Activated naive CD4-positive, alpha-beta T cell treated with anti-CD3 and anti-CD28 coated beads for 36 hours (primary cell): ENCODE measurements at regions of chr14 and their contacts with region 1.

Region 1: DNA sequence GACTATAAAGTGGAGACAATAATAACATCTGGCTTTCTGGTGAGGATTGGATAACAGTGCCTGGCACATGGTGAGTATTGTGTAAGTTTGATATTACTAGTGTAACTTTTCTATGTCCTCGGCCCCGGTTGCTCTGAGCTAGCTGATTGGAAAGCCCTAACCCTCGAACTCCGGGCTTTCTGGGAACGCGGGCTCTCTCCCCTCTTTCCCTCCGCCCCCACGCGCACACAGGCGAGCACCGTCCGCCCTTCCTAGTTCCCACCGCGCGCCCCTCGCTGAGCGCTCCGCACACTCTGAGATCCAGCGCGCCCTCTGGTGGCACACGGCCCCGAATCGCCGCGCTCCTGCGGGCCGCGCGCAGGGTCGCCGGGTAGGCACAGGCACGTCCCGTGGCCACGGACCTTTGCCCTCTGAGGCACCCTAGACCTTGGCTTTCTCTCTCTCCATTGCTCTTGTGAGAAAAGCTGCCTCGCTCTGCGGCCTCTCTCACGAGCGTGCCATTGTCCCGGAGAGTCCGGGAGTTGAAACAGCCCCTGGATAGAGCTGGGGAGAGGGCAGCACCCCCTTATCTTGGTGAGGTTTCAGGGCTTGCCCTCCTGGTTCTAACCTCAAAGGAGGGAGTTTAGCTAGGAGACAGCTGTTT is 23.2 kb upstream of the ESRRB start:
- DNase-seq: peak; percentile 53
- H3K4me3 Mint-ChIP-seq: no peak overlapping the region
- H3K27ac Mint-ChIP-seq: no peak overlapping the region
- H3K4me1 Mint-ChIP-seq: peaks cover 2% of the 10 kb centered on the region
- H3K27me3 Mint-ChIP-seq: peaks cover 8% of the 10 kb centered on the region

Region 2: GRCh38 chr14:75709207-75709812 is 643.5 kb before region 1 on chr14:
- CTCF ChIA-PET with region 1: interaction called, 7 read pairs
- intact Hi-C with region 1: loop called (anchors 10 kb)
- DNase-seq: peak; percentile 80
- H3K4me3 Mint-ChIP-seq: no peak overlapping the region
- H3K27ac Mint-ChIP-seq: no peak overlapping the region
- H3K4me1 Mint-ChIP-seq: no peaks in the 10 kb centered on the region
- H3K27me3 Mint-ChIP-seq: no peaks in the 10 kb centered on the region

Region 3: GRCh38 chr14:76045773-76046172 is 307.0 kb before region 1 on chr14:
- CTCF ChIA-PET with region 1: interaction called, 74 read pairs
- intact Hi-C with region 1: loop called (anchors 1 kb)
- DNase-seq: no peak
- H3K4me3 Mint-ChIP-seq: no peak overlapping the region
- H3K27ac Mint-ChIP-seq: no peak overlapping the region
- H3K4me1 Mint-ChIP-seq: no peaks in the 10 kb centered on the region
- H3K27me3 Mint-ChIP-seq: no peaks in the 10 kb centered on the region

Region 4: GRCh38 chr14:76050797-76051392 is 301.9 kb before region 1 on chr14:
- CTCF ChIA-PET with region 1: interaction called, 74 read pairs
- intact Hi-C with region 1: loop called (anchors 1 kb)
- DNase-seq: peak; percentile 76
- H3K4me3 Mint-ChIP-seq: no peak overlapping the region
- H3K27ac Mint-ChIP-seq: no peak overlapping the region
- H3K4me1 Mint-ChIP-seq: no peaks in the 10 kb centered on the region
- H3K27me3 Mint-ChIP-seq: no peaks in the 10 kb centered on the region

Region 5: DNA sequence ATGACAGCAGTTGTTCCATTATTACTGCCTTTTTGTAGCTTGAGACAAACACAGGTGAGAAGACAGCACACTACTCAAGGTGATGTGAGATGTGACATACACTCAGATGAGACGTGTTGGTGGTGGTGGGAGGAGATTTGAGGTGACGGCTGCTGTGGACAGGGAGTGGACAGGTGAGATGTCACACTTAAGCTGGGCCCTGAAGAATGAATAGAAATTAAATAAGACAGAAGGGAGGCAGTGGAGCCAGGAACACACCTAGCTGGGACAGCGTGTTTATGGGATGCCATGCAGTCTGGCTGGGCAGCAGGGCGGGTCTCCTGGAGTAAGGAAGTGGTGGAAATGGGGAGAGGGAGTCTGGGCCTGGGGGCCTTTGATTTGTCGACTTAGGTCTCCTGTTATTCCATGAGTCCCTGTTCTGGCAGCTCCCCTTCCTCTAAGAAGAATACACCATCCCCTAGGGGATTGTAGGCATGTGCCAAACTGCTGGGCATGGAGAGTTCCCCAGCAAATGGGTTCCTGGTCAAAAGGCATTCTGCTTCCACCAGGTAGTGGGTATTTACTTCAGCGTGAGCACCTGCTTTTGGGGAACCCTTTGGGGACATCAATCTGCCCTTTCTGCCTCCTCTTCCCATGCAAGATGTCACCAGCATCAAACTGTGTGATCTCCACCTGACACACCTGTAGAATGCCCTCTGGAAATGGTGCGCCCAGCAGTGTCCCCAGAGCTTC is 48.1 kb before region 1 on chr14:
- CTCF ChIA-PET with region 1: no interaction called
- intact Hi-C with region 1: no loop called
- DNase-seq: no peak
- H3K4me3 Mint-ChIP-seq: no peak overlapping the region
- H3K27ac Mint-ChIP-seq: no peak overlapping the region
- H3K4me1 Mint-ChIP-seq: no peaks in the 10 kb centered on the region
- H3K27me3 Mint-ChIP-seq: peaks cover 15% of the 10 kb centered on the region

Region 6: GRCh38 chr14:76386915-76387782 is 34.4 kb after region 1 on chr14:
- CTCF ChIA-PET with region 1: interaction called, 8 read pairs
- intact Hi-C with region 1: loop called (anchors 2 kb)
- DNase-seq: peak; percentile 77
- H3K4me3 Mint-ChIP-seq: no peak overlapping the region
- H3K27ac Mint-ChIP-seq: no peak overlapping the region
- H3K4me1 Mint-ChIP-seq: no peaks in the 10 kb centered on the region
- H3K27me3 Mint-ChIP-seq: peaks cover 28% of the 10 kb centered on the region